MCF 10A (cell line): ENCODE measurements at regions of chr3 and their contacts with region 1.

Region 1: GRCh38 chr3:160754855-160755747 is 930 bp upstream of the PPM1L start:
- DNase-seq: peak; percentile 93
- H3K4me3 Mint-ChIP-seq: peak overlapping the region; percentile 95
- H3K27ac Mint-ChIP-seq: peak overlapping the region; percentile 87
- H3K4me1 Mint-ChIP-seq: peaks cover 13% of the 10 kb centered on the region
- H3K27me3 Mint-ChIP-seq: no peaks in the 10 kb centered on the region
- CTCF ChIP-seq: no peak

Region 2: DNA sequence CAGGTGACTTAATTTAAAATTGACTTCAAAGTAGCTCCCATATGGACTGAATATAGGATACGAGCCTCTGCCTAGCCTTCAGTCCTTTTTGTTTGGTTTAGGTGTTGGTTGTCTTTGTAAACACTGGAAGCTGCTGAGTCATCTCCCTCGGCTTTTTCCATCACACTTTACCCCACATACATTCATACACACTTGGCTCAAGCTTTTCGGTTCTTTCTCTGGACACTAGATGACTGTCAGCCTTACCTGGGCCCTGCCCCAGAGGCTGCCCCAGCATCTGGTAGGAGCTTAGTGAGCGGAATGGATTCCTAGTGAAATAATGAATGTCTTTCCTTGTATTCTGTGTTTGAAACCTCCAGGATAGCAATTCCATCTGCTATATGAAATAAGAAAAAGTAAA is 967.9 kb before region 1 on chr3:
- CTCF ChIA-PET with region 1: no interaction called
- POLR2A ChIA-PET with region 1: no interaction called
- intact Hi-C with region 1: no loop called
- DNase-seq: peak; percentile 94
- H3K4me3 Mint-ChIP-seq: peak overlapping the region; percentile 47
- H3K27ac Mint-ChIP-seq: peak overlapping the region; percentile 89
- H3K4me1 Mint-ChIP-seq: peaks cover 55% of the 10 kb centered on the region
- H3K27me3 Mint-ChIP-seq: no peaks in the 10 kb centered on the region
- CTCF ChIP-seq: no peak

Region 3: GRCh38 chr3:160565442-160566403 is 189.4 kb before region 1 on chr3 and contains the start of gene KPNA4:
- CTCF ChIA-PET with region 1: interaction called, 4 read pairs
- POLR2A ChIA-PET with region 1: interaction called, 13 read pairs
- intact Hi-C with region 1: loop called (anchors 2 kb)
- DNase-seq: peak; percentile 98
- H3K4me3 Mint-ChIP-seq: peak within 1 kb of the TSS; percentile 96
- H3K27ac Mint-ChIP-seq: peak within 1 kb of the TSS; percentile 99
- H3K4me1 Mint-ChIP-seq: peaks cover 30% of the 10 kb centered on the region
- H3K27me3 Mint-ChIP-seq: no peaks in the 10 kb centered on the region
- CTCF ChIP-seq: no peak
- total RNA-seq, gene KPNA4: 85.9 and 127 TPM in 2 replicates

Region 4: DNA sequence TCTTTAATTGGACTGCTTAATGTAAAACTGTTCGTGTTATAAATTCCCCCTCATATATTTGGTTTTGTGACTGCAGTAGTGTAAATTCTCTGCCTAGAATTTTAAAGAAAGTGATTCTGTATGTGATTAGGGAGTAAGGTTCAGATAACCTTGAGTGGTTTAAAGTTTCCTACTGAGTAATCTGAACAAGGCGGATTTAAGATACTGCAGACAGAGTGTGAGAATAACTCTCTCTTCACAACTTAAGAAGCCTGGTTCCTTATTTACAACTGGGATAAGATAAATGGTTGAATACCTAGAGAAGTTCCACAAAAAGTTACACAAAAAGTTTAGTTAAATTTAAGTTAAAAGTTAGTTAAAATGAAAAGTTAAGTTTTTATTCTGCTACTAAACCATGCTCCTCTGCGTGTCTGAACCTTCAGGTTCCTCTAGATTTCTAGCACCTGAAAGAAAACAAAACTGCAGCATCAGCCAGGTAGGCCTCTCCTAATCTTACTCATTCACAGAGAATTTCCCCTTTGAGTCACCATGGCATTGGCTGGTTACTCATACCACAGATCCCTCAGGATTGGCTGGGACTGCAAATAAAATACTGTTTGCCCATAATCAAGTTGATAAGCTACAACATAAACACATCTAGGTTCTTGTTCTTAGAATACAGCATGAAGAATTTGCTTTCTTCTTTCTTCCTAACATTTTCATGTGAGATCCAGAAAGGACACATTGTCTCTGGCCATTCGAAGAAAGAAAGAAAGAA is 78.4 kb before region 1 on chr3 and contains the start of gene ARL14:
- CTCF ChIA-PET with region 1: no interaction called
- POLR2A ChIA-PET with region 1: interaction called, 18 read pairs
- intact Hi-C with region 1: loop called (anchors 10 kb)
- DNase-seq: peak; percentile 91
- H3K4me3 Mint-ChIP-seq: peak within 1 kb of the TSS; percentile 71
- H3K27ac Mint-ChIP-seq: peak within 1 kb of the TSS; percentile 95
- H3K4me1 Mint-ChIP-seq: peaks cover 36% of the 10 kb centered on the region
- H3K27me3 Mint-ChIP-seq: no peaks in the 10 kb centered on the region
- CTCF ChIP-seq: no peak
- total RNA-seq, gene ARL14: 0.72 and 1.1 TPM in 2 replicates

Region 5: DNA sequence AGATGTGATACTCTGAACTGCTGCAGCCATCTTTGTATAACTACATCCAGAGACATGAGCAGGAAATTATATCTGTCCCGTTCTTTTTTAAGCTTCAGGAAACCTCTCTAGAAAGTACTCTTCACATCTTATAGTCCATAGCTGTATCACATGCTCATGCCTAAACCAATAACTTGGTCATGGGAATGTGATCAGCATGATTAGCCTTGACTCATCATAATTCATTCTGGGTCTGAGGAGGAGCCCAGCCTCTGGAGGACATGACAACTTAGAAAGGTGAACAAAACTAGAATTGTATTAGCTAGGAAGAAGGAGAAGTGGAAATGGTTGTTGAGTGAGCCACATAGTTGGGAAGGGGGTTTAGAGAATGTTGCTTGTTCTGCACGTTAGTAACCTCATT is 13.8 kb after region 1 on chr3:
- CTCF ChIA-PET with region 1: interaction called, 3 read pairs
- POLR2A ChIA-PET with region 1: interaction called, 10 read pairs
- intact Hi-C with region 1: no loop called
- DNase-seq: no peak
- H3K4me3 Mint-ChIP-seq: no peak overlapping the region
- H3K27ac Mint-ChIP-seq: no peak overlapping the region
- H3K4me1 Mint-ChIP-seq: no peaks in the 10 kb centered on the region
- H3K27me3 Mint-ChIP-seq: no peaks in the 10 kb centered on the region
- CTCF ChIP-seq: no peak

Region 6: DNA sequence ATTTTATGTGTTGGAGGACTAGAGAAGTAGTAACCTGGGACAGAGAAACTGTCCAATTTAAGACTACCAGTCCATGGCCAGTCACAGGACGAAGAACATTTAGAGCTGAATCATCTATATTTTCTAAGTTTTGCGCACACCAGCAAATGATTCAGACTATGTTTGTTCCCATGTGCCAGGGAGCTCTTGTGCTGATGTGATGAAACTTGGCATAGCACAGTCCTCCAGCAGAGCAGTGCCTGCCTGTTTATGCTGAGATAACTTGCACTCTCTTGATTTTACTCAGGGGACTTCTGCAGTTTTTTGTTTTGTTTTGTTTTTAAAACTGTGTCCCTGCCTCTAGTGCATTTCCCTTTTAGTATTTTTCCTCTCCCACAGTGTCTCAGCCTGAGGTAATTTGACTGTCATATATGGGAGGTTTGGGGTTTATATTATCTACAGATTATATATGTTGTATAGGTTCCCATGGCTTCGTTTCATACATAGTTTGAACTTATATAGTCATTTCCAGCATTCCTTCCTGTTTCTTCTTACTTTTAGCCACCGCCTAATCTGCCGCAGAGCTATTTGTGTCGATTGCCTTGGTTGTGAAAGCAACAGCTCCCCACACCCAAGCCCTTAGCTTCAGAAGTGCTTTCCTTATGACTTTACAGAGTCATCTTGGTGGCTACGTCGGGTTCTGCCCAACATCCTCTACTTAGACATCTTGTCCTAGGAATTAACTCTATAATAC is 46.5 kb after region 1 on chr3:
- CTCF ChIA-PET with region 1: interaction called, 3 read pairs
- POLR2A ChIA-PET with region 1: interaction called, 31 read pairs
- intact Hi-C with region 1: loop called (anchors 5 kb)
- DNase-seq: peak; percentile 76
- H3K4me3 Mint-ChIP-seq: peak overlapping the region; percentile 18
- H3K27ac Mint-ChIP-seq: peak overlapping the region; percentile 37
- H3K4me1 Mint-ChIP-seq: peaks cover 22% of the 10 kb centered on the region
- H3K27me3 Mint-ChIP-seq: no peaks in the 10 kb centered on the region
- CTCF ChIP-seq: no peak

Region 7: GRCh38 chr3:160869818-160870217 is 114.7 kb after region 1 on chr3:
- CTCF ChIA-PET with region 1: interaction called, 3 read pairs
- POLR2A ChIA-PET with region 1: interaction called, 15 read pairs
- intact Hi-C with region 1: no loop called
- DNase-seq: peak; percentile 91
- H3K4me3 Mint-ChIP-seq: peak overlapping the region; percentile 59
- H3K27ac Mint-ChIP-seq: peak overlapping the region; percentile 69
- H3K4me1 Mint-ChIP-seq: peaks cover 20% of the 10 kb centered on the region
- H3K27me3 Mint-ChIP-seq: no peaks in the 10 kb centered on the region
- CTCF ChIP-seq: no peak

Region 8: GRCh38 chr3:161220850-161221753 is 466.0 kb after region 1 on chr3 and contains the start of gene NMD3:
- CTCF ChIA-PET with region 1: interaction called, 3 read pairs
- POLR2A ChIA-PET with region 1: interaction called, 16 read pairs
- intact Hi-C with region 1: no loop called
- DNase-seq: peak; percentile 95
- H3K4me3 Mint-ChIP-seq: peak within 1 kb of the TSS; percentile 79
- H3K27ac Mint-ChIP-seq: peak within 1 kb of the TSS; percentile 92
- H3K4me1 Mint-ChIP-seq: peaks cover 6% of the 10 kb centered on the region
- H3K27me3 Mint-ChIP-seq: no peaks in the 10 kb centered on the region
- CTCF ChIP-seq: no peak
- total RNA-seq, gene NMD3: 84.6 and 89.6 TPM in 2 replicates